Gastrocnemius medialis (tissue), 4 donors: ENCODE measurements at regions of chr1 and their contacts with region 1.

Region 1: DNA sequence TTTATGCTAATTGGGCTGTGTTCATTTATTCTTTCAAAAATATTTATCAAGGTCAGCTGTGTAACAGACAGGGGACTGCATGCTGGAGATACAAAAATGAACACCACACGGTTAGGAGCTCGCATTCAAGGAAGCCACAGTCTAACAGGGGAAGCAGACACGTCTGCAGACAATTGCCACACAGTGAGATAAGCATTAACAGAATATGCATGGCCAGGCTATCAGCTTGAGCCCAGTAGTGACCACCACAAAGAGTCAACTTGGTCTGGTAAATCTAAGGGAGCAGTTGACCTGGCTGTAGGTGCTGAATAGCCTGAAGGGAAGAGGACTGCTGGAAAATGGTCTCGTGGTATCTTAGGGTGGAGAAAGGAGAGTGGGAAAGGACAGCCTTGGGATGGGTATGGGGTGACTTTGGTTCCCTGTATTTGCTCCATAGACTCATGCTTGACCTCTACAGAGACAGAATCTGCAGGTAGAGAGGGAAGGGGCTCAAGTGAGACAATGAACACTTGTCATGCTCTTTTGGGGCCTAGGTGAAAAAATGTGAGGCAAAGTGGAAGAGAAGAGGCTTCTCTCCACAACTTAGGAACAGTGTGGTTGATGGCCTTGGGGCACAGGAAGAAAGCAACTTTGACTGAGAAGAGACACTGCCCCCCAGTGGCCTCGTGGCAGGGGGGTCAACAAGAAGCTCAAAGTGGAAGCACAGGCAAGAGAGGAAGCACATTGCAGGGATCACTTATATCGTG is 7.6 kb upstream of the NPL start:
- DNase-seq: peak; percentile 40 to 62
- ATAC-seq: peak; percentile 61 to 75
- H3K4me3 ChIP-seq: no peak overlapping the region
- H3K27ac ChIP-seq: no peak overlapping the region
- H3K4me1 ChIP-seq: no peaks in the 10 kb centered on the region
- H3K27me3 ChIP-seq: no peaks in the 10 kb centered on the region
- CTCF ChIP-seq: peak; percentile 32 to 80 (median 71)
- POLR2A ChIP-seq: no peak

Region 2: GRCh38 chr1:182446033-182446669 is 335.9 kb before region 1 on chr1:
- in situ Hi-C with region 1: loop called in 2 of 4 experiments (anchors 10 to 25 kb)
- intact Hi-C with region 1: loop called (anchors 5 kb)
- DNase-seq: no peak
- ATAC-seq: peak in 1 of 2 donors; percentile 55
- H3K4me3 ChIP-seq: no peak overlapping the region
- H3K27ac ChIP-seq: no peak overlapping the region
- H3K4me1 ChIP-seq: no peaks in the 10 kb centered on the region
- H3K27me3 ChIP-seq: no peaks in the 10 kb centered on the region
- CTCF ChIP-seq: peak in 4 of 5 experiments; percentile 25 to 63 (median 56)
- POLR2A ChIP-seq: no peak

Region 3: DNA sequence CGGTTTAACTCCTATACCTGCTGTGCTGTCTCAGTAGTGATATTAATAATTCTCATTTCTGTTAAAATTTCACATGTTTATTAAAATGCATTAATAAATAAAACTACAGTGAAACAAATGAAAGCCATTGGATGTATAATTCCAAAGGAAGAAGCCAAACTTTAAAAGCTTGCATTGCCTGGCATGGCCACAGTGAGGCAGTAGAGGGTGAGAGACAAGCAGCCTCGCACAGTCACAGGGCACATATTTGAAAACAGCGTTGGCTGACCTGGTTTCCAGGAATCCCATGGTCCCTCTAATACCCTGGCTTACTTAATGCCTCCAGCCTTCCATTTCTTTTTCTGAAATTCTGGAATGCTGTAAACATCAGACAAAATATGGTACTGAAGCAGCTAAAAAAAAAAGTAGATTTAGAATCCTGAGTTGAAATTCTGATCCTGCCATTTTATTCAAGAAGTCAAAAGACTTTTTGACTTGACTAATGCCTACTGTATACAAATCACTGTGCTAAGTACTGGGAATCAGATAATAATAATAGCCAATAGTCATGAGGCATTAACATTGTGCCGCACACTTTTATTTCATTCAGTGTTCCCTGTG is 186.3 kb before region 1 on chr1:
- in situ Hi-C with region 1: loop called (anchors 5 kb)
- intact Hi-C with region 1: no loop called
- DNase-seq: peak; percentile 33 to 51
- ATAC-seq: peak; percentile 58 to 78
- H3K4me3 ChIP-seq: no peak overlapping the region
- H3K27ac ChIP-seq: no peak overlapping the region
- H3K4me1 ChIP-seq: peaks cover 1 to 4% of the 10 kb centered on the region in 2 donors
- H3K27me3 ChIP-seq: no peaks in the 10 kb centered on the region
- CTCF ChIP-seq: peak; percentile 47 to 80 (median 69)
- POLR2A ChIP-seq: no peak